Activated CD8-positive, alpha-beta T cell treated with anti-CD3 and anti-CD28 coated beads, Interleukin-2, amount 10 ng/mL, durations not matched to agents 7 days and 5 days (primary cell): ENCODE measurements at regions of chr17 and their contacts with region 1.

Region 1: DNA sequence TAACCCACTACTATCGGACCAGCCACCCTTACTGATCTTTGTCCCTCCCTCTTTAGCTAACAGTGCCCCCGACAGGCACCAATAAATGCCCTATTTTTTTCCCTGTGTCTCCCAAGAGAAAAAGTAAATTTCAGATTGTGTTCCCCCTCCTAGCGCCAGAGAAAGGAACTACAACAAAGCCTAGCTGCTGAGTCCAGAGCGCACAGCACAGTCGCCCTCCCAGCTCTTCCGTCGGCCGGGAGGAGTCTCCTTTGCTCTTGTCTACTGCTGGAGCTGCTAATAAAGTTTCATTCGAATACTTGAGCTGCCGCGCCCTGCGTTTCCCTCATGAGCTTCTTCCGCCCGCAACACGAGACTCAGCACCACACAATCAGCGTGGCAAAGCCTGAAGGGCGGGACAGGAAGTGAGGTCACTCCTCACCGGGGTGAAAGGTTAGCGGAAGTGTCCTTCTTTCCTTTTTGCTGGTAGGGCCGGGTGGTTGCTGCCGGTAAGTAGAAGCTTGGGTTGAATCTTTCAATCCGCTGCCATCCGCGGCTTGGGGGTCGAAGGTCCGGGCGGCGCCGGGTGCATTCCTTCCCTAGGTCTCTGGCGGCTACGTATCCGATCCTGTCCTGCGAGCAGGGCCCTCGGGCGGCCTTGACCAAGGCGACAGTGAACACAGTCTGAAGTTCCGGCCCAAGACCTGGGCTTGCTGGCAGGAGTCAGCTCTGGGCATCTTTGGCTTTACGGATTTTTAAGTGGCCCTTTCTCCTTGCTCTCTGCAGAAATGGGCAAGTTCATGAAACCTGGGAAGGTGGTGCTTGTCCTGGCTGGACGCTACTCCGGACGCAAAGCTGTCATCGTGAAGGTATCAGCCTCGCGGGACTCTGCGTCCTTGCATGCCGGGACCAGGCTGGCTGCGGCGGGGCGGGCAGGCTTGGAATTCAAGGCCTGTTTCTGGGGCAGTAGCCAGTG is at the start of gene RPL27:
- DNase-seq: peak; percentile 99
- ATAC-seq: peak; percentile 99
- H3K4me3 Mint-ChIP-seq: peak within 1 kb of the TSS; percentile 96
- H3K27ac Mint-ChIP-seq: peak within 1 kb of the TSS; percentile 99
- H3K4me1 Mint-ChIP-seq: peaks cover 32% of the 10 kb centered on the region
- H3K27me3 Mint-ChIP-seq: no peaks in the 10 kb centered on the region
- total RNA-seq, gene RPL27: 949 to 980 TPM

Region 2: DNA sequence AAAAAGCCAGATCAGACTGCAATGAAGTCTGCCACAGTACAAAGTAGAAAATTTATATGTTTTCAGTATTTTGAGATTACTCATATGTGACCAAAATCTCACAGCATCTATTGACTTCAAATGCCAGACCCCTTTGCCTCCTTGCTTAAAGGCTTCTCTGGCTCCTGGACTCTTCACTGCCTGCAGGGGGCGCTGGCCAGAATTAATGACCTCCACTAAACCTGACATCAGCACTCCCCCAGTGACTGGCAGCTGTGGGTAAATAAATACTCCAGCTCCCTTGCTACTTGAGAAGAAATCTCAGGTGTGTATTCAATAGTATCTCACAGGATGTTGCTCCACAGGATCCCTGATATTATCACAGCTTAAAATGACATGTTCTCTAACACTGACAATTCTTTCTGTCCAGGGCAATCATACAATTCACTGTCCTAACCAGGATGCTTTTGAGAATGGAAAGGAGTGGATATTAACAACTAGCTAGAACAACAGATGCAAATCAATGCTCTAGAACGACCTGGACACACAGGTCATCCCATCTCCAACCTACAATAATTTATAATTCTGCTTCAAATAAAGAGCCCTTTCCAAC is 178.2 kb before region 1 on chr17:
- CTCF ChIA-PET with region 1: interaction called, 18 read pairs
- POLR2A ChIA-PET with region 1: interaction called, 14 read pairs
- DNase-seq: peak; percentile 79
- ATAC-seq: no peak
- H3K4me3 Mint-ChIP-seq: no peak overlapping the region
- H3K27ac Mint-ChIP-seq: peak overlapping the region; percentile 3
- H3K4me1 Mint-ChIP-seq: peaks cover 28% of the 10 kb centered on the region
- H3K27me3 Mint-ChIP-seq: peaks cover under 1% of the 10 kb centered on the region

Region 3: GRCh38 chr17:42843358-42843934 is 154.8 kb before region 1 on chr17:
- CTCF ChIA-PET with region 1: interaction called, 10 read pairs
- POLR2A ChIA-PET with region 1: interaction called, 4 read pairs
- DNase-seq: no peak
- ATAC-seq: no peak
- H3K4me3 Mint-ChIP-seq: no peak overlapping the region
- H3K27ac Mint-ChIP-seq: no peak overlapping the region
- H3K4me1 Mint-ChIP-seq: peaks cover 11% of the 10 kb centered on the region
- H3K27me3 Mint-ChIP-seq: no peaks in the 10 kb centered on the region

Region 4: GRCh38 chr17:42985225-42985624 is 13.0 kb before region 1 on chr17:
- CTCF ChIA-PET with region 1: interaction called, 30 read pairs
- POLR2A ChIA-PET with region 1: interaction called, 16 read pairs
- DNase-seq: no peak
- ATAC-seq: no peak
- H3K4me3 Mint-ChIP-seq: no peak overlapping the region
- H3K27ac Mint-ChIP-seq: no peak overlapping the region
- H3K4me1 Mint-ChIP-seq: peaks cover 35% of the 10 kb centered on the region
- H3K27me3 Mint-ChIP-seq: no peaks in the 10 kb centered on the region

Region 5: DNA sequence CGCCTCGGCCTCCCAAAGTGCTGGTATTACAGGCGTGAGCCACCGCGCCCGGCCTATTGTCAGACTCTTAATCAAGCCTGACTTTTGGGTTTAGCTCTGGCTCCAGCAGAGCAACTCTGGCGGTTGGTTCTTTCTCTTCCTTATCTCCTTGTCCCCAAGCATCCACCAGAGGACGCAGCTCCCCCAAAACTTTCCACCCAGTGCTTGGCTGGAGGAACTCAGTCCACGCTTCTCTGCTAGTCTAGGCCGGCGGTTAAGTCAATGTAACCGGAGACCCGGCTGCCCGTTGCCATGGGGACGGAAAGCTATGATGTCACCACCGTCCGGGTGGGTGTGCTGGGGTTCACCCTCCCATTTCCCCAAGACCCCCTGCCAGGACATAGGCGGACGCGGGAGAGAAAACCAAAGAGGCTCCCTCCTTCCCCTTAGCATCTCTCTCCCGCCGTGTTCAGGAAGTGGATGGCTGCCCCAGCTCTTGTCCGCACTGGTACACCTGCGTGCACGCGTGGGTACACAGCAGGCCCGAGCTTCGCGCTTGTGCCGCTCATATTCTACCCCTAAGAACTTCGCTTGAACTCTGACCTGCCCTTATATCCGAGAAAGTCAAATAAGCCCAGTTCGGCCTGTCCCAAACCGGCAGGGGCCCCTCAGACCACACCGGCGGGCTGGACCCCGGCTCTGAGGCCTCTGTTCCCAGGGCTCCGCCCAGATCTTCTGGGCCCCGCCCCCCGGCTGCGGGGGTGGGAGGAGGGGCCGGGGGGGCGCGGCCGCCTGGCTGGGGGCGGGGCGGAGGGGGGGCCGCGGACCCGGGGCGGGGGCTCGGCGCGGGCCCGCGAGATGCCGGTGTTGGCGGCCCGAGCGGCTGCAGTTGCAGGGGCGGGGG is 26.4 kb after region 1 on chr17 and contains the start of gene RND2:
- CTCF ChIA-PET with region 1: interaction called, 7 read pairs
- POLR2A ChIA-PET with region 1: interaction called, 13 read pairs
- DNase-seq: peak; percentile 85
- ATAC-seq: peak; percentile 68
- H3K4me3 Mint-ChIP-seq: peak within 1 kb of the TSS; percentile 76
- H3K27ac Mint-ChIP-seq: peak within 1 kb of the TSS; percentile 52
- H3K4me1 Mint-ChIP-seq: peaks cover 28% of the 10 kb centered on the region
- H3K27me3 Mint-ChIP-seq: peaks cover 22% of the 10 kb centered on the region
- total RNA-seq, gene RND2: not detected

Region 6: GRCh38 chr17:43367737-43368242 is 369.5 kb after region 1 on chr17:
- CTCF ChIA-PET with region 1: no interaction called
- POLR2A ChIA-PET with region 1: interaction called, 14 read pairs
- DNase-seq: peak; percentile 78
- ATAC-seq: peak; percentile 56
- H3K4me3 Mint-ChIP-seq: peak overlapping the region; percentile 92
- H3K27ac Mint-ChIP-seq: peak overlapping the region; percentile 100
- H3K4me1 Mint-ChIP-seq: peaks cover 52% of the 10 kb centered on the region
- H3K27me3 Mint-ChIP-seq: no peaks in the 10 kb centered on the region